ENCODE measurements at regions of chr20 and their contacts with region 1.

Region 1: GRCh38 chr20:36754656-36755222 is 8.8 kb upstream of the NDRG3 start:
- DNase-seq: no peak
- ATAC-seq: peak; percentile 91

Region 2: DNA sequence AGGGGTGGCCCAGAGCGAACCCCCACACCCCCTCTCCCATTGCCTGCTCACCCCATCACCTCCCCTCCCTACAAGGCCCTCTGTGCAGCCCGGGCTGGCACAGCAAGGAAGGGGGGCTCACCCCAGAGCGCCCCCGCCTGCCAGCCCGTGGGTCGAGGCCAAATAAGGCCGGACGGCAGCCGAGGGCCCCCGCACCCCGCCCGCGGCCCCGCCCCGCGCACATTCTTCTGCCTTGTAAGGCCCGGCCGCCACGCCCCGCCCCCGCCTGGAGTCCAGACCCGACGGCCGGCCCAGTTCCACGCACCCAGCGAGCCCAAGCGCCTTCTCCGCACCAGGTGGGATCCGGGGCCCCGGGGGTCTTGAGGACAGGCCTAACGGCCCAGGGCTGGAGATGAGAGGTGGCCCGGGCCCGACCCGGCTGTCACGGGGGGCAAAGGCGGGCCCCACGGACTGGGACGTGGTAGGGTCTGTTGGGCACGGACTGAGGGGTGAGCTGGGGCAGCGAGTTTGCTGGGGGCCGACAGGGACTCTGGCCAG is 213.4 kb before region 1 on chr20 and contains the start of gene MYL9:
- intact Hi-C with region 1: loop called (anchors 10 kb)
- DNase-seq: peak; percentile 97
- ATAC-seq: peak; percentile 91
- total RNA-seq, gene MYL9: 1,923 TPM

Region 3: GRCh38 chr20:36717657-36718056 is 37.1 kb before region 1 on chr20:
- intact Hi-C with region 1: loop called (anchors 2 kb)
- DNase-seq: no peak
- ATAC-seq: peak; percentile 39